Activated naive CD4-positive, alpha-beta T cell treated with anti-CD3 and anti-CD28 coated beads for 36 hours (primary cell): ENCODE measurements at regions of chr12 and their contacts with region 1.

Region 1: DNA sequence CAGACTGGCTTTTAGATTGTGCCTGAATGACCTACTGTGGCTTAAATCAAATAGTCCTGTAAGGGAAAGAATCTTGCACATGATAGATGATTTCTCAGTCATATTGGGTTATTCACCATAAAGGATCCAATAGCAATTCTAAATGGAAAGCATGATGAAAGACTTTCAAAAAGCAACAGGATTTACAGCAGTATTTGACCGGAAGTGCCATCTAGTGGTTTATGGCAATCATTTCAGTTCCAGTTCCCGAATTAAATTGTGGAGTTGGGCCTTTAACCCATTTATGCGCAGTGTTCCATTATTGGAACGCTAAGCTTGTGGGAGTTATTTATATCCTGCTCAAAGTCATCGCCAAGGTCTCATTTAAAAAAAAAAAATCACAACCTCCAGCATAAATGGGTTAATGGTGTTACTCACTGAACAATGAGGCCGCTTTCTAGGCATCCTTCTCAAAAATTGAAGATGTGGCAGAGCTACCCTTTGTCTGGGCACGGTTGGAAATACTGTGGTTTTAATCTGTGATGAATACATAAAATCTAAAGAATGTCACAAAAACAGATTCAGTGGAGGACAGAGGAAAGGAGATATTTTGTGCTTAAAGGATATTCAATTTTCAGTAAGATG is 60.8 kb upstream of the REP15 start:
- DNase-seq: peak; percentile 14
- H3K4me3 Mint-ChIP-seq: no peak overlapping the region
- H3K27ac Mint-ChIP-seq: no peak overlapping the region
- H3K4me1 Mint-ChIP-seq: no peaks in the 10 kb centered on the region
- H3K27me3 Mint-ChIP-seq: no peaks in the 10 kb centered on the region

Region 2: GRCh38 chr12:27424631-27425230 is 210.7 kb before region 1 on chr12:
- CTCF ChIA-PET with region 1: interaction called, 9 read pairs
- intact Hi-C with region 1: loop called (anchors 1 kb)
- DNase-seq: no peak
- H3K4me3 Mint-ChIP-seq: no peak overlapping the region
- H3K27ac Mint-ChIP-seq: no peak overlapping the region
- H3K4me1 Mint-ChIP-seq: no peaks in the 10 kb centered on the region
- H3K27me3 Mint-ChIP-seq: no peaks in the 10 kb centered on the region

Region 3: GRCh38 chr12:28023156-28023887 is 387.9 kb after region 1 on chr12:
- CTCF ChIA-PET with region 1: no interaction called
- intact Hi-C with region 1: no loop called
- DNase-seq: no peak
- H3K4me3 Mint-ChIP-seq: no peak overlapping the region
- H3K27ac Mint-ChIP-seq: no peak overlapping the region
- H3K4me1 Mint-ChIP-seq: no peaks in the 10 kb centered on the region
- H3K27me3 Mint-ChIP-seq: peaks cover 7% of the 10 kb centered on the region